Left lung (tissue), 14 donors: ENCODE measurements at regions of chr18 and their contacts with region 1.

Region 1: DNA sequence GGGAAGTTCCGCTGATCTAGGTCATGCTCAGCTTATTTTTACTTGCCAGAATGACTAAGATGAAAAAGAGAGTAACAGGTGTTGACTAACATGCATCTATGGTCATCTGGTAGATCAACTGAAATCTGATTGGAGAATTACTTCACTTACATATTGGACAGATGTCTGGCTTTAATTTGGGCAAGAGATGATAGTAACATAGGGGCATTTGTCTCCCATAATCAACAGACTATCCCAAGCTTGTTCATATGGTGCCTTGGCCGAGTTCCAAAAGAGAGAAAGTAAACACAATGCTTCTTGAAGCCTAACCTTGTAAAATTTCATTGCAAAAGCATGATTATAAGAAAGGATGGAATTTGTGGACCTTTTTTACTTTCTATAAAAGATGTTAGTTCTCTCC is 503.7 kb downstream of the ADCYAP1 start:
- DNase-seq: no peak
- ATAC-seq: no peak
- H3K4me3 ChIP-seq: no peak overlapping the region
- H3K27ac ChIP-seq: no peak overlapping the region
- H3K4me1 ChIP-seq: no peaks in the 10 kb centered on the region
- H3K27me3 ChIP-seq: no peaks in the 10 kb centered on the region
- CTCF ChIP-seq: no peak

Region 2: DNA sequence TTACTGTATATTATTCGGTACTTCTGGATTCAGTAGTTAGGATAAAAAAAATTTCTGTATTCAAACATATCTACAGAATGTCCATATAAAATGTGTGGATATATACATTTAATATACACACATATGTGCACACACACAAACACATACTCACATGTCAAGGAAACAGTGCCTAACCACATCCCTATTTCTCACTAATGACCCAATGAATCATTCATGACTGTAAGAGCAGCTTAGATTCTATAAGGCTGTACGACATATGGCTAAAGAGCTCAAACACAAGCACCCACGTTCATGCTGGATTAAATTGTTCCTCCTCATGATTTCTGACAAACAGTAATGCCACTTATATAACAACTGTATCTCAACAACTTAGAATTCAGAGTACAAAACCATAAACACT is 46.4 kb before region 1 on chr18:
- intact Hi-C with region 1: loop called in 1 of 2 experiments (anchors 5 kb)
- DNase-seq: no peak
- ATAC-seq: no peak
- H3K4me3 ChIP-seq: no peak overlapping the region
- H3K27ac ChIP-seq: no peak overlapping the region
- H3K4me1 ChIP-seq: no peaks in the 10 kb centered on the region
- H3K27me3 ChIP-seq: no peaks in the 10 kb centered on the region
- CTCF ChIP-seq: no peak

Region 3: GRCh38 chr18:1539276-1539675 is 130.9 kb after region 1 on chr18:
- intact Hi-C with region 1: no loop called
- DNase-seq: no peak
- ATAC-seq: no peak
- H3K4me3 ChIP-seq: no peak overlapping the region
- H3K27ac ChIP-seq: no peak overlapping the region
- H3K4me1 ChIP-seq: no peaks in the 10 kb centered on the region
- H3K27me3 ChIP-seq: no peaks in the 10 kb centered on the region
- CTCF ChIP-seq: no peak